Psoas muscle (tissue), 8 donors: ENCODE measurements at regions of chr18 and their contacts with region 1.

Region 1: DNA sequence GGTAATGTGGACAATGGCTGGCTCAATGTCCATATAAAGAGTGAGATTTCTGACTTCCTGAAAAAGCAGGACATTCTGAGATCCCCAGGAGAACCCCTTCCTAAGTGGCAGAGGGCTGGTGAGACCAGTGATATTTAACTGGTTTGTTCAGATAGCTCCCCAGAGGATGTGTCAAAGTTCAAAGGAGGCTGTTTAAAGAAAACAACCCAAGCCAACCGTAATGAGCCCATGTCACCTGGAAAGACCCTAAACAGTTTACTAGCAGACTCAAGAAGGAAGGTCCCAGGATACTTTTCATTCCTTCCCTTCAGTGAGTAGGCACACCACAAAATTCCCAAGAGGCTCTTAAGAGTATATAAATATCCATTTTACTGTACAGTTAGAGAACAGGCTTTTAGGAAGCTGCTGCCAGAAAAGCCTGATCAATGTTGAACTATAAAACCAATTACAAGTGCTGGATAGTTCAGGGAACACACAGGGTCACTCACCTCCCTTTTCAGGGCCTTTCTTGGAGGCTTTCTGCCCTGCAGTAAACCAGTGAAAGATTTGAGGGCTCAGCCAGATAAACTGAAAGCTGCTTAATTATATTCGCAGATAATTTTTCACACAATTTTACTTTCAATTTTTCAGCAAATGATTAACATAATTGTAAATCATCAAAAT is 293.5 kb downstream of the ASXL3 start:
- DNase-seq: no peak
- ATAC-seq: no peak
- H3K4me3 ChIP-seq: no peak overlapping the region
- H3K27ac ChIP-seq: no peak overlapping the region
- H3K4me1 ChIP-seq: no peaks in the 10 kb centered on the region
- H3K27me3 ChIP-seq: no peaks in the 10 kb centered on the region
- CTCF ChIP-seq: no peak

Region 2: GRCh38 chr18:33851546-33852078 is 19.9 kb before region 1 on chr18:
- intact Hi-C with region 1: no loop called
- DNase-seq: no peak
- ATAC-seq: no peak
- H3K4me3 ChIP-seq: no peak overlapping the region
- H3K27ac ChIP-seq: no peak overlapping the region
- H3K4me1 ChIP-seq: no peaks in the 10 kb centered on the region
- H3K27me3 ChIP-seq: peaks cover 0 to 3% (median 0%) of the 10 kb centered on the region in 3 donors
- CTCF ChIP-seq: no peak

Region 3: GRCh38 chr18:33898427-33898826 is 26.9 kb after region 1 on chr18:
- intact Hi-C with region 1: loop called in 1 of 2 experiments (anchors 1 kb)
- DNase-seq: no peak
- ATAC-seq: no peak
- H3K4me3 ChIP-seq: no peak overlapping the region
- H3K27ac ChIP-seq: no peak overlapping the region
- H3K4me1 ChIP-seq: no peaks in the 10 kb centered on the region
- H3K27me3 ChIP-seq: no peaks in the 10 kb centered on the region
- CTCF ChIP-seq: no peak